ENCODE measurements at regions of chr11 and their contacts with region 1.

Region 1: DNA sequence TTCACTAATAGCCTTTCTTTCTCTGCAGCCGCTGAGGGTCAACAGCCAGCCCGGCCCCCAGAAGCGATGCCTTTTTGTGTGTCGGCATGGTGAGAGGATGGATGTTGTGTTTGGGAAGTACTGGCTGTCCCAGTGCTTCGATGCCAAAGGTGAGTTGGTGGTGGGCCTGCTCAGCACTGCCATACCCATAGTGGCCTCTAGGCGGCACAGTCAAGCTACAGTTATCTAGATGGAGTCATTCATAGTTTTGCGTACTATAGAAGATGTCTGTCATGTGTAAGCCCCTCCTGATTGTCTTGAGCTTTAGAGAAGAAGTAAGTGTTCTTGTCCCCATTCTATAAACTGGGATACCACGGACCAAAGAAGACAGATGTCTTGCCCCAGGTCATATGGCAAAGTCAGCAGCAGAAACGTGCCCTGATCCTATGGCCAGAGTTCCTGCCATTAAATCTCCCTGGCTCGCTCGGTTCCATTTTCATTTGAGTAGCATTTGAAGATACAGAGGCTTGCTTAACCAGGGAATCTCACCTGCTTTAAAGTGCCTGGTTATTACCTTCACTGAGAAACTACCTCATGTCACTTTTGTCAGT is 42.1 kb upstream of the CRTAM start:
- DNase-seq: peak; percentile 56 to 81 (median 61)
- H3K4me3 ChIP-seq: no peak overlapping the region
- H3K4me3 Mint-ChIP-seq: peak overlapping the region in 1 of 7 donors; percentile 6
- H3K27ac ChIP-seq: no peak overlapping the region
- H3K27ac Mint-ChIP-seq: peak overlapping the region in 2 of 8 donors; percentile 32 to 65
- H3K4me1 ChIP-seq: no peaks in the 10 kb centered on the region
- H3K4me1 Mint-ChIP-seq: peaks cover 0 to 6% (median 5%) of the 10 kb centered on the region in 3 donors
- H3K27me3 ChIP-seq: no peaks in the 10 kb centered on the region
- H3K27me3 Mint-ChIP-seq: no peaks in the 10 kb centered on the region

Region 2: DNA sequence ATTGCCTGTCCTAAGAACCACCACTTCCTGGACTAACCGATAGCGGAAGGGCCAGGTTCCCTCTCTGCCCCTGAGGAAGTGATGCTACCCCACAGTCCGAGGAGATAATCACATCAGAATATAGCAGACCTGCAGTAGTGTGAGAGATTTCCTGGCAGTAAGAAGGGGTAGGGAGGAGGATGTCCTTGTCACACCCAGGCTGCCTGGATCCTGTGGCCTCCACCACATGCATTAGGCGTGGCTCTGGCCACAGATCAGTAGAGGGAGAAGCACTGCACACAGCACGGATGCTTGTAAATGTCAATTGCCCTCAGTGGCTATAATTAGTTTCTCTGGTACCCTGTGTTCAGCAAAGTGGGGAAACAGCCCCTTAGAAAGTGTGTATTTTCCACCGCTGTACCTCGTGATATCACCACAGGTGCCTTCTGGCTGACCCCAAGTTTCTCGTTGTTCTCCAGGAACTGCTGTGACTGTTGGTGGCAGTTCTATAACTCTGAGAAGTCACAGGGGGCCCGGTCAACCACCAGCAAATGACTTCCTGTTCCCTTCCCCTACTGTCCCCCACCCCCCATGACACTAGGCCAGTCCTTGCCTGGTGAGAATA is 78.9 kb before region 1 on chr11:
- CTCF ChIA-PET with region 1: no interaction called
- POLR2A ChIA-PET with region 1: no interaction called
- DNase-seq: peak in 3 of 5 donors; percentile 6 to 57 (median 55)
- H3K4me3 ChIP-seq: no peak overlapping the region
- H3K4me3 Mint-ChIP-seq: peak overlapping the region in 6 of 7 donors; percentile 40 to 78 (median 68)
- H3K27ac ChIP-seq: no peak overlapping the region
- H3K27ac Mint-ChIP-seq: peak overlapping the region; percentile 76 to 97 (median 91)
- H3K4me1 ChIP-seq: peaks cover 50% of the 10 kb centered on the region
- H3K4me1 Mint-ChIP-seq: peaks cover 60 to 82% (median 63%) of the 10 kb centered on the region in 3 donors
- H3K27me3 ChIP-seq: no peaks in the 10 kb centered on the region
- H3K27me3 Mint-ChIP-seq: no peaks in the 10 kb centered on the region

Region 3: GRCh38 chr11:122781378-122782195 is 14.6 kb before region 1 on chr11:
- CTCF ChIA-PET with region 1: interaction called, 15 read pairs
- POLR2A ChIA-PET with region 1: no interaction called
- DNase-seq: peak; percentile 51 to 78 (median 56)
- H3K4me3 ChIP-seq: no peak overlapping the region
- H3K4me3 Mint-ChIP-seq: no peak overlapping the region
- H3K27ac ChIP-seq: no peak overlapping the region
- H3K27ac Mint-ChIP-seq: peak overlapping the region in 2 of 8 donors; percentile 29 to 60
- H3K4me1 ChIP-seq: no peaks in the 10 kb centered on the region
- H3K4me1 Mint-ChIP-seq: peaks cover 5 to 7% (median 6%) of the 10 kb centered on the region in 3 donors
- H3K27me3 ChIP-seq: no peaks in the 10 kb centered on the region
- H3K27me3 Mint-ChIP-seq: peaks cover 0 to 3% of the 10 kb centered on the region in 2 donors

Region 4: DNA sequence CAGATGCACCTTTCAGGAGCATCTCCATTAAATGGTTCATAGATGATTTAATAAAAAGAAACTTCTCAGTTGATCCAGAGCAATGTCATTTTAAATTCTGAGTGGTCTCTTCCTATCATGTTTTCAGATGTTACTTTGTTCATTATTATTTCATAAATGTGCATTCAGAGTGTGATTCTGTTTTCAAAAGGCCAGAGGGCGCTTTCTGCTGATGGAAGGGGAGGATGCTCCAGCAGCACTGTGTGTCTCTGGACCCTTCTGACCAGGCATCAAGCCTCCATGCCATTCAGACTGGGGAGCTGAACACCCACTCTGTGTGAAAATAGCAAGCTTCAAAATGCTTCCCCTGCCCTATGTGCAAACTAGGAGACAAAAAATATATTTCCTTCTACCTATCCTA is 18.2 kb after region 1 on chr11:
- CTCF ChIA-PET with region 1: interaction called, 22 read pairs
- POLR2A ChIA-PET with region 1: no interaction called
- DNase-seq: no peak
- H3K4me3 ChIP-seq: no peak overlapping the region
- H3K4me3 Mint-ChIP-seq: no peak overlapping the region
- H3K27ac ChIP-seq: no peak overlapping the region
- H3K27ac Mint-ChIP-seq: peak overlapping the region in 1 of 8 donors; percentile 29
- H3K4me1 ChIP-seq: peaks cover 8% of the 10 kb centered on the region
- H3K4me1 Mint-ChIP-seq: peaks cover 18 to 29% (median 22%) of the 10 kb centered on the region in 3 donors
- H3K27me3 ChIP-seq: no peaks in the 10 kb centered on the region
- H3K27me3 Mint-ChIP-seq: no peaks in the 10 kb centered on the region

Region 5: DNA sequence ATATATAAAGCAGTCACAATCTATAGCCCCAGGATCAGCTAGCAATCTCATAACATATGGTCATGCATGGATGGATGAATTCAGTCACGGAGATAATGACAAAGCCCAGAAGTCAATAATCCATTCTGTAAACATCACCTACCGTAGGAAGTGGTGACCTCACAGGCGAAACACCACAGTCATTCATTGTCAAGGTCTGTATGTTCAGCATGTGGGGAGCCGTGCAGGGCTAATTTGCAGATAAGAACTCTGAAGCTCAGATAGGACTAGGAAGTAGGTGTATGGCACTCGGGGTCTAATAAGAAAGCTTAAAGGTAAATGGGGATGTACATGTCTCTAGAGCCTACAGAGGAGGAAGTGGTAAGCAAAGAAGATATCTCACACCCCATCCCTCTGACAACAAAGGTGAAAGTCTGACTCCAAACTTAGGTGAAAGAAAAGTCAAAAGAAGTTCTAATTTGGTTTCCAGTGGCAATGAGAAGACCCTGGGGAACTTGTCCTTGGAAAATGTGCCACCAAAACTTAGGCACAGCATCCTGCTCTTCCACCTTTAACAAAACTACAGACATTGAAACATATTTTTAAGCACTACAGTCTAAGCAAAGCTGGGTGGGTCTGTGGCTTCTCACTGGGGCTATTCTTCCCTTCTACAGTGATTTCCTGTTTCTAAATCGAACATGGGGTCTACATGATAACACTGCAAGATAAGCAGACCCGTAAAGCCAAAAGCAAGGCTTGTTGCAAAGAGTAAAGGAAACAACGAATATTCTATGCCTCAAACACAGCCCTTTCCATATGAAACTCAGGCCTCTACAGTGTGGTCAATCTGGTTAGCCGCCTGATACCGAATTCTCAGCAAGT is 47.3 kb after region 1 on chr11:
- CTCF ChIA-PET with region 1: interaction called, 16 read pairs
- POLR2A ChIA-PET with region 1: interaction called, 3 read pairs
- DNase-seq: peak; percentile 45 to 88 (median 76)
- H3K4me3 ChIP-seq: peak overlapping the region; percentile 34
- H3K4me3 Mint-ChIP-seq: peak overlapping the region; percentile 57 to 81 (median 73)
- H3K27ac ChIP-seq: peak overlapping the region; percentile 74
- H3K27ac Mint-ChIP-seq: peak overlapping the region; percentile 90 to 96 (median 94)
- H3K4me1 ChIP-seq: peaks cover 76% of the 10 kb centered on the region
- H3K4me1 Mint-ChIP-seq: peaks cover 81 to 85% (median 85%) of the 10 kb centered on the region in 3 donors
- H3K27me3 ChIP-seq: no peaks in the 10 kb centered on the region
- H3K27me3 Mint-ChIP-seq: no peaks in the 10 kb centered on the region

Region 6: GRCh38 chr11:122863704-122864326 is 67.6 kb after region 1 on chr11:
- CTCF ChIA-PET with region 1: interaction called, 14 read pairs
- POLR2A ChIA-PET with region 1: no interaction called
- DNase-seq: peak in 1 of 5 donors; percentile 53
- H3K4me3 ChIP-seq: no peak overlapping the region
- H3K4me3 Mint-ChIP-seq: no peak overlapping the region
- H3K27ac ChIP-seq: no peak overlapping the region
- H3K27ac Mint-ChIP-seq: peak overlapping the region in 1 of 8 donors; percentile 70
- H3K4me1 ChIP-seq: no peaks in the 10 kb centered on the region
- H3K4me1 Mint-ChIP-seq: peaks cover 0 to 10% (median 4%) of the 10 kb centered on the region in 3 donors
- H3K27me3 ChIP-seq: no peaks in the 10 kb centered on the region
- H3K27me3 Mint-ChIP-seq: no peaks in the 10 kb centered on the region

Region 7: GRCh38 chr11:123054301-123055065 is 258.3 kb after region 1 on chr11:
- CTCF ChIA-PET with region 1: interaction called, 11 read pairs
- POLR2A ChIA-PET with region 1: interaction called, 9 read pairs
- DNase-seq: peak in 2 of 5 donors; percentile 65 to 69
- H3K4me3 ChIP-seq: no peak overlapping the region
- H3K4me3 Mint-ChIP-seq: peak overlapping the region in 5 of 7 donors; percentile 36 to 73 (median 65)
- H3K27ac ChIP-seq: no peak overlapping the region
- H3K27ac Mint-ChIP-seq: peak overlapping the region; percentile 14 to 99 (median 93)
- H3K4me1 ChIP-seq: peaks cover 52% of the 10 kb centered on the region
- H3K4me1 Mint-ChIP-seq: peaks cover 57 to 66% (median 62%) of the 10 kb centered on the region in 3 donors
- H3K27me3 ChIP-seq: no peaks in the 10 kb centered on the region
- H3K27me3 Mint-ChIP-seq: no peaks in the 10 kb centered on the region